ENCODE measurements at regions of chr6 and their contacts with region 1.

Region 1: GRCh38 chr6:165884813-165885765 is 222.0 kb upstream of the PDE10A start:
- DNase-seq: peak; percentile 13
- H3K4me3 Mint-ChIP-seq: no peak overlapping the region
- H3K27ac Mint-ChIP-seq: no peak overlapping the region
- H3K4me1 Mint-ChIP-seq: peaks cover 7% of the 10 kb centered on the region
- H3K27me3 Mint-ChIP-seq: peaks cover 6% of the 10 kb centered on the region

Region 2: GRCh38 chr6:166097915-166098522 is 212.9 kb after region 1 on chr6:
- intact Hi-C with region 1: loop called (anchors 2 kb)
- DNase-seq: peak; percentile 8
- H3K4me3 Mint-ChIP-seq: no peak overlapping the region
- H3K27ac Mint-ChIP-seq: no peak overlapping the region
- H3K4me1 Mint-ChIP-seq: no peaks in the 10 kb centered on the region
- H3K27me3 Mint-ChIP-seq: peaks cover 13% of the 10 kb centered on the region